ENCODE measurements at regions of chr22 and their contacts with region 1.

Region 1: GRCh38 chr22:23069502-23070357 is 589 bp upstream of the GNAZ start:
- DNase-seq: peak; percentile 52 to 100 (median 100)
- ATAC-seq: peak; percentile 95
- H3K4me3 ChIP-seq: peak overlapping the region; percentile 33
- H3K27ac ChIP-seq: no peak overlapping the region
- H3K4me1 ChIP-seq: peaks cover 4 to 22% of the 10 kb centered on the region in 2 experiments; a peak in 4 of 5 replicates
- H3K27me3 ChIP-seq: peaks cover 73 to 93% of the 10 kb centered on the region in 2 experiments
- CTCF ChIP-seq: peak in 2 of 3 experiments; percentile 34 to 50; a peak in 3 of 6 replicates
- EP300 ChIP-seq: no peak
- POLR2A ChIP-seq: no peak
- RAD21 ChIP-seq: peak in 1 of 2 experiments; percentile 21; a peak in 1 of 4 replicates

Region 2: GRCh38 chr22:23042179-23042578 is 27.6 kb before region 1 on chr22:
- CTCF ChIA-PET with region 1: no interaction called
- POLR2A ChIA-PET with region 1: interaction called, 13 read pairs
- in situ Hi-C with region 1: no loop called
- intact Hi-C with region 1: no loop called
- DNase-seq: no peak
- ATAC-seq: no peak
- H3K4me3 ChIP-seq: no peak overlapping the region
- H3K27ac ChIP-seq: no peak overlapping the region
- H3K4me1 ChIP-seq: peaks cover 0 to 5% of the 10 kb centered on the region in 2 experiments; a peak in 1 of 5 replicates
- H3K27me3 ChIP-seq: peaks cover 4 to 20% of the 10 kb centered on the region in 2 experiments; a peak in 3 of 5 replicates
- CTCF ChIP-seq: no peak
- EP300 ChIP-seq: no peak
- POLR2A ChIP-seq: no peak
- RAD21 ChIP-seq: no peak

Region 3: DNA sequence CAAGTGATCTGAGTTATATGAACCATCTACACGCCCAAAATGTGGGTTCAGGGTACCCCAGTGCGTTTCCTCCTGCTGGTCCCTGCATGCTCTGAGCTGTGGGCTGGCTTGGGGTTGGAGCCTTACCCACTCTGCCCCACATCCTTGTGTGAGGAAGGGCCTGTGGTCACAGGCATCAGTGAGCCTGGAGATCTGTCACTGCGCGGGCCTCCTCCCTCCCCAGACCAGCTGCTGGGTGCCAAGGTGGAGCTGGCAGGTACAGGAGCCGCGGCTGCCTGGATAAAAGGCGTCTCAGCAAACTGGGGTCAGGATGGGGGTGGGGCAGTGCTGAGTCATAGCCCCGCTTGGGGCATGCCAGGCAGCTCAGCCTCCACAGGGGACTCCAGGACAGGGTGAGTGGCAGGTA is 18.5 kb after region 1 on chr22:
- CTCF ChIA-PET with region 1: interaction called, 3 read pairs
- POLR2A ChIA-PET with region 1: interaction called, 136 read pairs
- in situ Hi-C with region 1: no loop called
- intact Hi-C with region 1: loop called (anchors 1 kb)
- DNase-seq: peak; percentile 51 to 59 (median 55)
- ATAC-seq: peak; percentile 4
- H3K4me3 ChIP-seq: no peak overlapping the region
- H3K27ac ChIP-seq: no peak overlapping the region
- H3K4me1 ChIP-seq: peaks cover 17 to 38% of the 10 kb centered on the region in 2 experiments; a peak in 4 of 5 replicates
- H3K27me3 ChIP-seq: peaks cover 63 to 93% of the 10 kb centered on the region in 2 experiments; a peak in 4 of 5 replicates
- CTCF ChIP-seq: no peak
- EP300 ChIP-seq: no peak
- POLR2A ChIP-seq: no peak
- RAD21 ChIP-seq: no peak

Region 4: DNA sequence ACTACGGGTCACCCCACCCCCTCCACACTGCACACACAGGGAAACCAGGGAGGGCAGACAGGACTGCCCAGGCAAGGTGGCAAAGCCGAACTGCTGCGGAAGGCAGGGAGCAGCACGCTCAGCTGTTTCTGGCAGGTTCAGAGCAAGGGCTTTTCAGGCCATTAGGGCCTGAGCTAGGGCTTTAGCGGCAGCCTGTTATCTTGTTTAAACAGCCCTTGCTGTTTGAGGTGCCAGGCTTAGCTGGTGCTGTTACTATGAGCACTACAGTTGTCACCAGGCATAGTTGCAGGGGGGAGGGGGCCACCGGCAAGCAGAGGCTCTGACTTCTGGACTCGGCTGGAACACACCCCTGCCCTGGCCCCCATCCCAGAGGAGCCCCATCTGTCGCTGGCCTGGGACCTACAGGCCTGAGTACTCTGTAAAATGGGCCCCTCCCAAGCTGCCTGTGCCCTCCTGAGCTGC is 37.2 kb after region 1 on chr22:
- CTCF ChIA-PET with region 1: no interaction called
- POLR2A ChIA-PET with region 1: interaction called, 28 read pairs
- in situ Hi-C with region 1: no loop called
- intact Hi-C with region 1: no loop called
- DNase-seq: peak; percentile 59 to 66 (median 64)
- ATAC-seq: peak; percentile 1
- H3K4me3 ChIP-seq: no peak overlapping the region
- H3K27ac ChIP-seq: no peak overlapping the region
- H3K4me1 ChIP-seq: peaks cover 0 to 33% of the 10 kb centered on the region in 2 experiments; a peak in 2 of 5 replicates
- H3K27me3 ChIP-seq: peaks cover 63 to 100% of the 10 kb centered on the region in 2 experiments
- CTCF ChIP-seq: 0 out of 6 replicates have a peak, but pooled peaks of 1 of the 3 experiments have one; percentile 16
- EP300 ChIP-seq: no peak; the same call in 1 of the 2 replicates
- POLR2A ChIP-seq: no peak
- RAD21 ChIP-seq: no peak